ENCODE measurements at regions of chr3 and their contacts with region 1.

Region 1: DNA sequence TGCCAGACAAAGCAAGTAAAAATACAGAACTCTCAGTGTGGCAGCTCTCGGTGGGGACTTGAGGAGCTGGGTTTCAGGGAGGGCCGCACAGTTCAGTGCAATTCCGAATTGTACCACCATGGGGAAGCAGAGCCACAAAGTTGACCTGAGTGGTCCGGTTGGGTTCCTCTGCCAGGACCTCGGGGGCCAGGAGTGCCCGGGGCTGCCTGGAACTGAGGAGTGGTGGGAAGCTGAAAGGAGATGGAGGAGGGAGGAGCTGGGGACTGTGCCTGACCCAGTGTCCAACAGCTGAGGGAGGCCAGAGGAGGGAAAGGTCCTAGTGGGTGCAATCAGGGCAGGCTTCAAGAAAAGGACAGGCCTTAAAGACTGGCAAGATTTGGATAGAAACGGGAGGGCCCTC is 32.2 kb upstream of the TRH start:
- ATAC-seq: peak; percentile 64 to 98 (median 90)
- H3K4me3 ChIP-seq: no peak overlapping the region
- H3K27ac ChIP-seq: no peak overlapping the region
- H3K4me1 ChIP-seq: peaks cover 2 to 4% of the 10 kb centered on the region in 2 donors

Region 2: DNA sequence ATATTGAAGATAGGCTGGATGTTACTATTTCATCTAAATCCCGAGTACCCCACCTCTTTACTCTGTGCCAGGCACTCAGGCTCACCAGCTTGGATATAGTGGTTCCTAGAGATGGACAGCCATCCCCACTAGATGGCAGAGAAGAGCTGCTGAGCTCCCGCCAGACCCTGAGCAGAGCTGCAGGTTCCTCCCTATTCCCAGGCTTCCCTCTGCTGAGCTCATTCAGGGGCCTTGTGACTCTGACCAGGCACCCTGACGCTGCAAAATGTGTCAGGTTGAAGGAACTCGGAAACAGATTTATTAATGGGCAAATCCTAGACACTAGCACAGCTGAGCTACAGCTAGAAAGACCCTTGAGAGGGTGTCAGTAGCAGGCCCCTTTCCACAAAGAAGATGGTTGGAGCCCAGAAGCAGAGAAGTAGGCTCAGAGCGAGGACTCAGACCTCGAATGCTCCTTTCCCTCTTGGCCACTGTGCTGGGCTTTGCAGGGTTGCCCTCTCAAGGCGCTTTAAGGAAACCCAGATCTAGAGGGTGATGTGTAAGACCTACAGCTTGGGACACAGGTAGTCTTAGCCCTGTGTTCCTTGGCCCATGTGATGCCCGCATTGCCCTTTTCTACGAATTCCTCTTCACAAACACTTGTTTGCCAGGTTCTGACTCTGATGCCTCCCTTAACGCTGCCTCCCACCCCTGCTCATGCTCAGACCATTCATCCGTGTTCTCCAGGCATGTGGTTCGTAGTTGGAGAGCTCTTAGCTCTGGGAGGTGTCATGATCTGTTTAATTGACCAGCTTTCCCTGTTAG is 451.9 kb before region 1 on chr3:
- in situ Hi-C with region 1: loop called in 3 of 9 experiments (anchors 25 kb)
- ATAC-seq: peak; percentile 88 to 99 (median 98)
- H3K4me3 ChIP-seq: no peak overlapping the region
- H3K27ac ChIP-seq: peak overlapping the region in 1 of 2 donors; percentile 26
- H3K4me1 ChIP-seq: peaks cover 6 to 7% of the 10 kb centered on the region in 2 donors

Region 3: DNA sequence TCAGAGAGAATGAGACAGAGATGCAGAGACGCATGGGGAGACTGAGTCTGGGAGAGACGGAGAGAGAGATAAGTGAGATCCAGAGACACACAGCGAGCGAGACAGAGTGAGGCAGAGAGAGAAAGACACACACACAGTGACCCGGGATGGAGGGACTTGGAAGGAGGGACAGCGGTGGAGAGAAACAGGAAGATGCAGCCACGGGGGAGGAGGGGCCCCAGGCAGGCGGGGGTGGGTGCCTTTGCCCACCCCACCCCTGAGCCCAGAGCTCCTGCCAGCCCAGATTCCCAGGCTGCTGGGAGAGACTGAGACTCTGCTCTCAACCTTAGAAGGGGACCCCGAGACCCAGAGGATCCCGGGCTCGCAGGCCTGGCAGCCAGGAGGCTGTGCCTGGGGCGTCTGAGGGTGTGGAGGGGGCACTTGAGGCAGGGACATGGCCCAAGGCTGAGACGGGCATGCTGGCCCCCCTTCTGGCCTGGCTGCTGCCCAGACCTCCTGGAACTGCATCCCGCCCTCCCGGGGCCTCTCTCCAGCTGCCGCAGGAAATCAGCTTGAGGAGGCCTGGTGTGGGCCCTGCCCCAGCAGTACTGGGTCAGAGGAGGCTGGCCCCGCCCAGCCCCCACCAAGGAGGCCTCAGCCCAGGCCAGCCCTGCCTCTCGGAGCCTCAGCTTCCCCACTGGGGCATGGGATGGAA is 381.2 kb before region 1 on chr3:
- in situ Hi-C with region 1: no loop called
- ATAC-seq: peak; percentile 75 to 89 (median 82)
- H3K4me3 ChIP-seq: no peak overlapping the region
- H3K27ac ChIP-seq: peak overlapping the region; percentile 23 to 62
- H3K4me1 ChIP-seq: peaks cover 43 to 47% of the 10 kb centered on the region in 2 donors

Region 4: DNA sequence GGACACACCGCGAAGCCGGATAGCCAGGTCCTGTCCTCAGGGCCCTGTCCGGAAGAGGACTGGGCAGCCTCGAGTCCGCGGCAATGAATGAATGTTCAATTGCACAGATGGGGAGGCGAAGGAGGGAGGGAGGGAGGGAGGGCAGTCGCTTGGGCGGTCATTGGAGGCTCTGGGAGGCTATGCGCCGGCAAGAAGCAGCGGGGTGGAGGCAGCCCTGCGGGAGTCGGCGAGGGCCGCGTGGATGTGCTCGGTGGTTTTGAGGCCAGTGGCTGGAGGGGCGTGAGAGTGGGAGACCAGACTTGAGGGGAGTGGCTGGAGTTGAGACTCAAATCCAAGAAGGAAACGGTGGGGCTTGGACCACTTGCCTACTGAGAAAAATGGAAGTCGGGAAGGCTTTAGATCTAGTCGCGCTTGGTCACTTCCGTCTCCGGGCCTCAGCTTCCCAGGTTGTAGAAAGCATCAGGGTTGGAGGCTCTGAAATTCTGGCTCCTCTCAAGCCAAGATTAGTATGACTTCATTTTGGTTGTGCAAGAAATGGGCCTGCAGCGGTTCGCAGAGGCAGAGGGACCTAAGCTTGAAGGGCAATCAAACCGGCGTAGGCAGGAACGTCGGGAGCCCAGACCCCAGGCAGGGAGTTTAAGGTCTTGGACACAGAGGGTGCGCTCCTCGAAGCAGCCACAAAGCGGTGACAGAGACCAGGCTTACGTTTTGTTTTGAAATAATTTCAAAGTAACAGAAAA is 314.7 kb before region 1 on chr3:
- in situ Hi-C with region 1: loop called in 6 of 9 experiments (anchors 10 to 25 kb)
- ATAC-seq: peak; percentile 36 to 83 (median 70)
- H3K4me3 ChIP-seq: peak overlapping the region in 4 of 5 donors; percentile 17 to 36 (median 30)
- H3K27ac ChIP-seq: peak overlapping the region in 1 of 2 donors; percentile 30
- H3K4me1 ChIP-seq: peaks cover 13 to 22% of the 10 kb centered on the region in 2 donors

Region 5: DNA sequence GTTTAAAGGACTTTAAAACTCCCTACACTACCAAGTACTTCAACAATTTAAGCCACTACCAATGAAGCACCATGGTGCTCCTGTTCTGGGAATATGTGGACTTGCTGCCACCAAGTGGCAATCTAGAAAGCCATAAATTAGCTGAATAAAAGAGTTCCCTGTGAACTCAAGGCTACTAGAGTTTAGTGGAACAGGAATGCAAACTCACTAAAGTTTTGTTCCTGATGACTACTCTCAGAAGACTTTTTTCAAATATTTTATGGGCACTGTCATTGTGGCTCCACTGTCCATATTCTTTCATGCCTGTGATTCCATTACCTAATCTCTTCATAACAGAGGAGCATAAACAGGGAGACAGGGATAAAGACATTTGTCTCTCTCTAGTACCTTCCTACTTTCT is 112.7 kb before region 1 on chr3:
- in situ Hi-C with region 1: no loop called
- ATAC-seq: peak; percentile 70 to 97 (median 89)
- H3K4me3 ChIP-seq: no peak overlapping the region
- H3K27ac ChIP-seq: no peak overlapping the region
- H3K4me1 ChIP-seq: no peaks in the 10 kb centered on the region

Region 6: DNA sequence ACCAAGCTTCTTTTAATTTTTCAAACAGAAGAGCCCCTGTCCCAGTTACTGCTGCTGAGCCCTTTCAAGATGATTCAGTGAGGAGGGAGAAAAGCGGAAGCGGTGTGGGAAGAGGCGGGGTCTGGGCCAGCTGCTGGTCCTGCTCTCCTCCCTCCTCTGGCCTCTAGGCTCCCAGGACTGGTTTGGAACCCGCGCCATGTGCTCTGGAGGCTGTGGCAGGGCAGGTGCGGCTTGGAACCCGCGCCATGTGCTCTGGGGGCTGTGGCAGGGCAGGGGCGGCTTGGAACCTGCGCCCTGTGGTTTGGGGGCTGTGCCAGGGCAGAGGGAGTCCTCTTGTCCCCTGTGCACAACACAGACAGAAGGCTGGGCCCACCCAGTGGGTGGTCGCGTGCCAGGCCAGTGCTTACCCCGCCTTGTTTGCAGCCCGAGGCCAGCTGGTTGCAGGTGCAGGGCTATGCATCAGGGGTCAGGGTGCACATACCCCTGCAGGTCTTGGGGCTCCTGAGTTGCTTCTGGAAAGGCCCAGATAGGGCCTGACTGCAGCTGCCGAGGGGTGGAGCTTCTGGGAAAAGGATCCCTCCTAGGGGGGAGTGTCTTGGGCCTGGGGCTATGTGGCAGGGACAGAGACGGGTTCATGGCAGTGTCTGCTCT is 151.6 kb after region 1 on chr3:
- in situ Hi-C with region 1: loop called in 1 of 9 experiments (anchors 25 kb)
- ATAC-seq: peak in 4 of 8 experiments; percentile 27 to 41 (median 34)
- H3K4me3 ChIP-seq: no peak overlapping the region
- H3K27ac ChIP-seq: peak overlapping the region in 1 of 2 donors; percentile 10
- H3K4me1 ChIP-seq: peaks cover 3 to 19% of the 10 kb centered on the region in 2 donors